Activated CD4-positive, alpha-beta T cell treated with anti-CD3 and anti-CD28 coated beads, Interleukin-2, amount 10 ng/mL, durations not matched to agents 7 days and 5 days (primary cell): ENCODE measurements at regions of chr15 and their contacts with region 1.

Region 1: DNA sequence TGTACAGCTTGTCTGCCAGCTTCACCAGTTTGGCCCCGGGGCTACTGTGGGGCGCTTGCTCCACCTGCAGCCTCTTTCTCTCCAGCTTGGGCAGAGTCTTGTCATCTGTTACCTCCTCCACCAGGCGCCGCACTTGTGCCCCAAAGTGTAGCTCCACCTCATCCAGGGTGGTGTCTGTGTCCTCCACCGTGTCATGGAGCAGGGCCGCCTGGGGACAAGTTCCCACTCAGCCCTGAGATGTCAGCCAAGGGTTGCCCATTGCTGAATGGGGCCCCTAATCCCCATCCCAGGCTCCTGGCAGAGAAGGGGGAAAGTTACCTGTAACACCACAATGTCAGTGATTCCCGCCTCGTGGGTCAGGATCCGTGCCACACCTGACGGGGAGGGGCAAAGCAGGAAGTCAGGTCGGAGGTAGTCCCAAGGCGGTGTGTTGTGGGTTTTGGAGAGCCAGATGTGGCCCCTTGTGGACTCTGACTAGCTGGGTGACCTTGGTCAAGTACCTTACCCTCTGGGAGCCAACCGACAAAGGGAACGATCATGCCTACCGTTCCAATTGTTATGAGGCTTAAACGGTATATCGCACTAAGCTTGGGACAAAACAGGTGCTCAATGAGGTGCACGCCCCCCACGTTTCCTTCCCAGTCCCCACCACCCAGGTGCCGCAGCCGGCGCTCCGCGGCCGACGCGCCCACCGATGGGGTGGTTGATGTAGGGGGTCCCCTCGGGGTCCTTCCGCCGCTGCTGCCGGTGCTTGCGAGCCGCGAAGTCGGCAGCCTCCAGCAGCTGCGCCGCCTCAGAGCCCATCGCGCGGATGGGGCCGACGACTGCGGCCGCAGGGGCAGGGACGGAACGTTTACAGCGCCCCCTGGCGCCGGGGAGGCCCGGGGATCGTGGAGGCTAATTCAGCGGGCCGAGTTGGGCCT is at the start of gene HDDC3:
- DNase-seq: peak; percentile 93
- H3K4me3 Mint-ChIP-seq: peak within 1 kb of the TSS; percentile 98
- H3K27ac Mint-ChIP-seq: peak within 1 kb of the TSS; percentile 100
- H3K4me1 Mint-ChIP-seq: peaks cover 64% of the 10 kb centered on the region
- H3K27me3 Mint-ChIP-seq: no peaks in the 10 kb centered on the region
- total RNA-seq, gene HDDC3: 22.9 to 26.2 TPM

Region 2: GRCh38 chr15:90451053-90451850 is 480.7 kb before region 1 on chr15:
- CTCF ChIA-PET with region 1: no interaction called
- POLR2A ChIA-PET with region 1: no interaction called
- DNase-seq: no peak
- H3K4me3 Mint-ChIP-seq: no peak overlapping the region
- H3K27ac Mint-ChIP-seq: no peak overlapping the region
- H3K4me1 Mint-ChIP-seq: peaks cover 1% of the 10 kb centered on the region
- H3K27me3 Mint-ChIP-seq: no peaks in the 10 kb centered on the region

Region 3: GRCh38 chr15:90716976-90717821 is 214.8 kb before region 1 on chr15 and contains the start of gene BLM:
- CTCF ChIA-PET with region 1: interaction called, 11 read pairs
- POLR2A ChIA-PET with region 1: no interaction called
- DNase-seq: peak; percentile 97
- H3K4me3 Mint-ChIP-seq: peak within 1 kb of the TSS; percentile 77
- H3K27ac Mint-ChIP-seq: peak within 1 kb of the TSS; percentile 97
- H3K4me1 Mint-ChIP-seq: peaks cover 29% of the 10 kb centered on the region
- H3K27me3 Mint-ChIP-seq: no peaks in the 10 kb centered on the region
- total RNA-seq, gene BLM: 50.2 to 57.7 TPM

Region 4: GRCh38 chr15:90872486-90873379 is 59.3 kb before region 1 on chr15:
- CTCF ChIA-PET with region 1: interaction called, 10 read pairs
- POLR2A ChIA-PET with region 1: no interaction called
- DNase-seq: peak; percentile 28
- H3K4me3 Mint-ChIP-seq: peak overlapping the region; percentile 89
- H3K27ac Mint-ChIP-seq: peak overlapping the region; percentile 91
- H3K4me1 Mint-ChIP-seq: peaks cover 74% of the 10 kb centered on the region
- H3K27me3 Mint-ChIP-seq: no peaks in the 10 kb centered on the region

Region 5: GRCh38 chr15:90895336-90896117 is 36.5 kb before region 1 on chr15:
- CTCF ChIA-PET with region 1: interaction called, 63 read pairs
- POLR2A ChIA-PET with region 1: no interaction called
- DNase-seq: no peak
- H3K4me3 Mint-ChIP-seq: no peak overlapping the region
- H3K27ac Mint-ChIP-seq: no peak overlapping the region
- H3K4me1 Mint-ChIP-seq: no peaks in the 10 kb centered on the region
- H3K27me3 Mint-ChIP-seq: no peaks in the 10 kb centered on the region

Region 6: DNA sequence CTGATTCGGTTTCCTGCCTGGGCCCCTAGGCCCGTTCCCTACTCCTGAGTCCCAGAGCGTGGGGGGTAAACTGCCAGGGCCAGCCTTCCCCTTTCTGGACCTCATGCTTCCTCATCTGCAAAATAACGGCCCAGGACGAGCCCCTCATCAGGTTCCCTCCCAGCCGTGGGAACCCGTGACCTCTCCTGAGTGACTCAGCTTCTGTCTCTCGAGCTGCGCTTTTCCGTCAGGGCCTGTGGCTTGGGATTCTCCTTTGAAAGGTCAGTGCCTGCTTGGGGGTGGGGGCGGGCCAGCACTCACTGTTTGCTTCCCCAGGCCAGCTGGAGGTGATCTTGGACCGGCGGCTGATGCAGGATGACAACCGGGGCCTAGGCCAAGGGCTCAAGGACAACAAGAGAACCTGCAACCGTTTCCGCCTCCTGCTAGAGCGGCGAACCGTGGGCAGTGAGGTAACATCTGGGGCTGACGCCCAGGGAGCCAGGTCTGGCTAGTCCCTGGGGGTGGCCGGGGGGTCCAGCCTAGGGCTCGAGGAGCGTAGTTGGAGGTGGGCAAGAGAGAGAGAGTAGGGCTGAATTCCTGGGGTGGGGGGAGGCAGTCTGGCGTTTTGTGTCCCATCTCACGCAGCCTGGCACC is 16.1 kb before region 1 on chr15:
- CTCF ChIA-PET with region 1: interaction called, 51 read pairs
- POLR2A ChIA-PET with region 1: no interaction called
- DNase-seq: no peak
- H3K4me3 Mint-ChIP-seq: no peak overlapping the region
- H3K27ac Mint-ChIP-seq: no peak overlapping the region
- H3K4me1 Mint-ChIP-seq: no peaks in the 10 kb centered on the region
- H3K27me3 Mint-ChIP-seq: no peaks in the 10 kb centered on the region

Region 7: DNA sequence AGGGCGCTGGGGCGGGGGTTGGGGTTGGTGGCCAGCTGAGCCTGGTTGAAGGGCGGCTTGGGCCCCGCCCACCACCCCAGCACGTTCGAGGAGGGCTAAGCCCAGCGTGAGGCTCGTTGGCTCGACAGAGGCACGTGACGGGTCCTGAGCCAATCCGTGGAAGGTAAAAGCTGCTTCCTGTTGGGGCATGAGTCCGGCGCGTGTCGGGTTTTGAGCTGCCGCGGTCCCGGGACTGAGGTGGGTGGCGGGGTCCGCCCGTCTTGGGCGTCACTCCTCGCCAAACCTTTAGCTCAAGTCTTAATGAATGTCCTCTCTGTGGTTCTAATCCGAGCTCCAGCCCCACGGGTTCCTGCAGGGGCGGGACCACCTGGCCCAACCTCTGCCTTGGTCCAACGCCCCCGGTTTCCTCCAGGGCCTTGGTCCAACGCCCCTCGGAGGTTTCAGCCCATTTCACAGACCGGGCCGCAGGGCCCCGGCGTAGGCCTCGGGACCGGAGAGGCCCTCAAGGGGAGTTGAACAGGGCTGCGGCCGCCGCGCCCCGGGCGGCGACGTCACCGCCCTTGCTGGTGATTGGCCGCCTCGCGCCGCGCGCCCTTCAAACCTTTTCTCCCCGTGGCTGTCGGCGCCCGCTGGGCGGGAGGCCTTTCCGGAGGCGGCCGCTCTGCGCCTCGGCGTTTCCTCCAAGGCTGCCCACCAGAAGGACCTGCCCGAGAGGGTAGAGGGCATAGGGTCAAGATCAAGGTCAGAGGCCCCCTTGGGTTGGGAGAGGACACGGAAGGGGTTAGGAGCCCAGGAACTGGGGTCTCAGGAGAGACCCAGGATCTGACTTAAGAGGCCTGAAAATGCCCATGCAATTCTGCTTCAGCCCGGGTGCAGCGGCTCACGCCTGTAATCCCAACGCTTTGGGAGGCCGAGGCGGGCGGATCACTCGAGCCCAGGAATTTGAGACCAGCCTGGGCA is 23.0 kb after region 1 on chr15 and contains the start of gene RCCD1:
- CTCF ChIA-PET with region 1: interaction called, 140 read pairs
- POLR2A ChIA-PET with region 1: no interaction called
- DNase-seq: peak; percentile 94
- H3K4me3 Mint-ChIP-seq: peak within 1 kb of the TSS; percentile 89
- H3K27ac Mint-ChIP-seq: peak within 1 kb of the TSS; percentile 96
- H3K4me1 Mint-ChIP-seq: peaks cover 28% of the 10 kb centered on the region
- H3K27me3 Mint-ChIP-seq: no peaks in the 10 kb centered on the region
- total RNA-seq, gene RCCD1: 30.8 to 35.9 TPM